HepG2 (cell line): ENCODE measurements at regions of chr16 and their contacts with region 1.

Region 1: DNA sequence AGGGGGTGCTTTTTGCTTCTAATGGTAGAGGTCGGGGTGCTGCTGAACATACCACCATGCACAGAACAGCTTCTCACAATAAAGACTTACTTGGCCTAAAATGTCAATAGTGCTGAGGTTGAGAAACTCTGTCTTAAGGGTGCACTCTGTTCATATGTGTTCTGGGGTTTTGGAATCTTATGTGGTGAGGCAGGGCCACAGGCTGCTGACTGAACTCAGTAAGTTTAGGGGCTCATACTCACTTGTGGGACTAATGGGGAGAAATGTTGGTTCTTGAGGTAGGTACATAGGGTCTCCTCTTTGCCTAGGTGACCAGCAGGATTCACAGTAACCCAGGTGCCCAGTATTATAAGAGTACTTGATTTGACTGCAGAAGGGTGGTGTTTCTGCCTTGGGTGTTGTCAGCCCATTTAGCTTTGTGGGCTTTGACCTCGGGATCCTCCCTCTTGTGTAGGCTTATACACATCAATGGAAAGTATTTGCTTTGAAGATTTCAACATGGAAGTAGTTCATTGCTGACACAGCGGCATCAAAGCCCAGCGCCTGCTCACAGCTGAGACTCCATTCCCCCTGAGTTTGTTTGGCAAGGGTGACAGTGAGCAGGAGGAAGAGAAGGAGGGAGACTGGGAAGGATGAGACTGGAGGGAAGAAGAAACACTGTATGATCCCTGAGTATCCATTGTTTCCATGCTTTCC is 17.2 kb downstream of the SLC7A6 start:
- DNase-seq: peak; percentile 97
- ATAC-seq: peak; percentile 97
- H3K4me3 ChIP-seq: peak overlapping the region in 1 of 3 experiments; percentile 26; a peak in 1 of 6 replicates
- H3K27ac ChIP-seq: peak overlapping the region; percentile 81
- H3K4me1 ChIP-seq: peaks cover 78% of the 10 kb centered on the region
- H3K27me3 ChIP-seq: no peaks in the 10 kb centered on the region
- CTCF ChIP-seq: no peak; the same call in 1 of the 2 replicates
- EP300 ChIP-seq: peak; percentile 81 to 97; a peak in 3 of 4 replicates
- POLR2A ChIP-seq: peak in 1 of 2 experiments; percentile 44; a peak in 1 of 4 replicates
- RAD21 ChIP-seq: peak; percentile 51

Region 2: GRCh38 chr16:68200088-68200783 is 81.3 kb before region 1 on chr16:
- CTCF ChIA-PET with region 1: no interaction called
- POLR2A ChIA-PET with region 1: no interaction called
- in situ Hi-C with region 1: no loop called
- intact Hi-C with region 1: no loop called
- DNase-seq: no peak
- ATAC-seq: no peak
- H3K4me3 ChIP-seq: no peak overlapping the region
- H3K27ac ChIP-seq: no peak overlapping the region
- H3K4me1 ChIP-seq: 0 out of 2 replicates have a peak, but pooled peaks cover 7% of the 10 kb centered on the region
- H3K27me3 ChIP-seq: no peaks in the 10 kb centered on the region
- CTCF ChIP-seq: no peak
- EP300 ChIP-seq: no peak
- POLR2A ChIP-seq: no peak
- RAD21 ChIP-seq: no peak

Region 3: DNA sequence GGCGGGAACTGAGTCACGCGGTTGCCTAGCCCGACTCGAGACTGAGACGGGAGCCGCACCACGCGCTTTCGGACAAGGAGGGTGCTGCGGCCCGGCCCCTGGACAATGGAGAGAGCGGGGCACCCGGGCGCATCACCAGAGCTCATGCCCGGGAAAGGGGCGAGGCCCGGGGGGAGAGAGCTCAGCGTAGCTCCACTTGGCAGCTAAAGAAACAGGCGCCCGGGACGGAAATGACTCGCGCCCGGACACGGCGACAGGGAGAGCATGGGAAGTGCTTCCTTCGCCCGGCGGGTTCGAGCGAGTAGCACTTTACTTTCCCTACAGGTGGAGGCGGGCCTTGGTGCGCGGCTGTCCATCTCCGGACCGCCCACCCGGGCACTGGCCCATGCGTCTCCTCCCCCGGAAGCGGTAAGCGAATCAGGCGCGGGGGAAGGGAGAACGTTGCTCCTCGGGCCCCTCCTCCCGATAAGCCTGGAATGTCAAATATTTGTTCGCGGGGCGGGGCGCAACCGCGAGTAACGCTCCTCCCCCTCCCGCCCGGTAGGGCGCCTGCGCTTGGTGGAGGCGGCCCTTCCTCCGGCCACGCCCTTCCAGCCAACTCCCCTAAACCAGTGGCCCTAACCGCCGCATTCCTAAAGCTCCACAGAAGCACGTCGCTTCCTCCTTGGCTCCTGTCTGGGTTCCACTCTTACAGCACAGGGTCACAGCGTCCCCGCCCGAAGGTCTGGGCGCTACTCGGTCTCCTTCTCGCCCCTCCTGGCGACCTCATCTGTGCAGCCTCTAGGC is 44.1 kb before region 1 on chr16:
- CTCF ChIA-PET with region 1: no interaction called
- POLR2A ChIA-PET with region 1: interaction called, 10 read pairs
- in situ Hi-C with region 1: no loop called
- intact Hi-C with region 1: loop called (anchors 1 kb)
- DNase-seq: peak; percentile 98
- ATAC-seq: peak; percentile 71
- H3K4me3 ChIP-seq: peak overlapping the region; percentile 66 to 94 (median 93)
- H3K27ac ChIP-seq: peak overlapping the region; percentile 85
- H3K4me1 ChIP-seq: peaks cover 38% of the 10 kb centered on the region
- H3K27me3 ChIP-seq: no peaks in the 10 kb centered on the region; a peak in 1 of 5 replicates
- CTCF ChIP-seq: peak; percentile 10; the same call in 1 of the 2 replicates
- EP300 ChIP-seq: peak; percentile 77 to 92
- POLR2A ChIP-seq: peak in 1 of 2 experiments; percentile 91; a peak in 2 of 4 replicates
- RAD21 ChIP-seq: peak; percentile 28; the same call in 1 of the 2 replicates

Region 4: DNA sequence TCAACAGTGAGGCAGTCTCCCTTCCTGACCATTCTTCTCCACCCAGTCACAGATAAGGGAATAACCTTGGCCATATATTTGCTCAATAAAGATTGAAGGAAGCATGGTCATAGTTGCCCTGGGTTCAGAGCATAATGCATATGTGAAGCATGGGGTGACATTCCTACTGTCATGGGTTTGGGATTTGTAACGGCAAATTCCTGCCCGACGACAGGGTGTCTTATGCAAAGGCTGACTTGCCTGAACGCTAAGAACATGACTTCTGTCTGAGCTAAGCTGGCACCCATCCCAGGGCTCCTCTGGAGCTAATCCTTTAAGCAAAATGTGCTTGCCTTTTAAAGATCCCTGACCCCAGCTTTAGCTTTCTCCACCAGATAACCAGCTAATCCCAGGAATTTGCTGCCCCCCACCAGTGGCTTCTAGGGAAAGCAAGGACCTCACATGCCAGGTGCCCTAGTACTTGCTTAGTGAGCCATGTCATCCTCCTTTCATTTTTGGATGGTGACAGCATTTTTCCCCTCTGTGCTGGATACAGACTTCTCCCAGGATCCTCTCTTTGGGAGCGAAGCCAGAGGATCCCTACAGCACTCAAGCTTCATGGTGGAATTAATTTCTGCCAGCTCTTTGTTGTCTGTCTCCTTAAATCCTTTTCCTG is 17.5 kb after region 1 on chr16:
- CTCF ChIA-PET with region 1: no interaction called
- POLR2A ChIA-PET with region 1: interaction called, 17 read pairs
- in situ Hi-C with region 1: no loop called
- intact Hi-C with region 1: no loop called
- DNase-seq: peak; percentile 77
- ATAC-seq: peak; percentile 51
- H3K4me3 ChIP-seq: no peak overlapping the region
- H3K27ac ChIP-seq: peak overlapping the region; percentile 28
- H3K4me1 ChIP-seq: peaks cover 37% of the 10 kb centered on the region
- H3K27me3 ChIP-seq: no peaks in the 10 kb centered on the region
- CTCF ChIP-seq: 0 out of 2 replicates have a peak, but pooled peaks have one; percentile 11
- EP300 ChIP-seq: no peak
- POLR2A ChIP-seq: peak; percentile 36 to 50; a peak in 1 of 4 replicates
- RAD21 ChIP-seq: no peak

Region 5: DNA sequence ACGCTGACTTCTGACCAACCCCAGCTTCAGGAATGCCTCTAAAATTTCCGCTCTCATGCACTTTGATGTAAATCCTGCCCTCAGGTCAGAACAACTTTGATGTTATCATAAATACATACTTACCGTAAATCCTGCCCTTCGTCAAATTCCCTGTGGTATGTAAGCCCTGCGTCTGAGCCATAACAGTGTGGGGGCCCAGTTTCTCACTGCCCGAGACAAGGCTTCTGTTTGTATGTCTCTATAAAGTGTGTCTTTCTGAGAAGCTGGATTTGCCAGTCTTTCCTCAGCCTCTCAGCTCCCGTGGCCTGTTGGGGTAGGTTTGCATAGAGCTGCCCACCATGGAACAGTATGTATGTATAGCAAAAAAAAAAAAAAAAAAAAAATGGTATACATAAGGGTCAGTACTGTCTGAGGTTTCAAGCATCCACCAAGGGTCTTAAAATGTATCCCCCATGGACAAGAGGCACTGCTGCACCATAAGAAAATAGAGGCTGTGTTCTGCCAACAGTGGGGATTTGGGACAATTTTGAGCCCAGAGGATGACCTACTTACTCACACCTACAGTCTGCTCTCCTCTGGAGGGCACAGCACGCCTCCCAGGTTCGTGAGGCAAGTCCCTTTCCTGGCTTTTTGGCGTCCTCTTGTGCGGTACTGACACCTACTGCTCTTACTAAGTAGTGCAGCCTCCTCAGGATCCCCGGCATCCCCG is 46.8 kb after region 1 on chr16:
- CTCF ChIA-PET with region 1: interaction called, 3 read pairs
- POLR2A ChIA-PET with region 1: interaction called, 4 read pairs
- in situ Hi-C with region 1: no loop called
- intact Hi-C with region 1: loop called (anchors 1 kb)
- DNase-seq: peak; percentile 88
- ATAC-seq: peak; percentile 86
- H3K4me3 ChIP-seq: no peak overlapping the region; a peak in 1 of 6 replicates
- H3K27ac ChIP-seq: peak overlapping the region; percentile 50
- H3K4me1 ChIP-seq: peaks cover 54% of the 10 kb centered on the region
- H3K27me3 ChIP-seq: no peaks in the 10 kb centered on the region
- CTCF ChIP-seq: peak; percentile 96
- EP300 ChIP-seq: peak in 1 of 2 experiments; percentile 82; a peak in 2 of 4 replicates
- POLR2A ChIP-seq: no peak
- RAD21 ChIP-seq: peak; percentile 96